PC-9 (cell line): ENCODE measurements at regions of chr12 and their contacts with region 1.

Region 1: GRCh38 chr12:108691175-108691997 is 39.9 kb downstream of the CORO1C start:
- DNase-seq: peak; percentile 89 to 97
- H3K4me3 ChIP-seq: peak overlapping the region; percentile 36; the same call in 1 of the 2 replicates
- H3K27ac ChIP-seq: peak overlapping the region; percentile 84
- H3K4me1 ChIP-seq: peaks cover 47% of the 10 kb centered on the region
- H3K27me3 ChIP-seq: no peaks in the 10 kb centered on the region
- CTCF ChIP-seq: peak; percentile 44; the same call in 1 of the 2 replicates

Region 2: GRCh38 chr12:108442067-108442466 is 249.3 kb before region 1 on chr12:
- CTCF ChIA-PET with region 1: no interaction called
- POLR2A ChIA-PET with region 1: no interaction called
- intact Hi-C with region 1: no loop called
- DNase-seq: no peak
- H3K4me3 ChIP-seq: no peak overlapping the region
- H3K27ac ChIP-seq: no peak overlapping the region
- H3K4me1 ChIP-seq: no peaks in the 10 kb centered on the region
- H3K27me3 ChIP-seq: peaks cover 89% of the 10 kb centered on the region
- CTCF ChIP-seq: no peak

Region 3: DNA sequence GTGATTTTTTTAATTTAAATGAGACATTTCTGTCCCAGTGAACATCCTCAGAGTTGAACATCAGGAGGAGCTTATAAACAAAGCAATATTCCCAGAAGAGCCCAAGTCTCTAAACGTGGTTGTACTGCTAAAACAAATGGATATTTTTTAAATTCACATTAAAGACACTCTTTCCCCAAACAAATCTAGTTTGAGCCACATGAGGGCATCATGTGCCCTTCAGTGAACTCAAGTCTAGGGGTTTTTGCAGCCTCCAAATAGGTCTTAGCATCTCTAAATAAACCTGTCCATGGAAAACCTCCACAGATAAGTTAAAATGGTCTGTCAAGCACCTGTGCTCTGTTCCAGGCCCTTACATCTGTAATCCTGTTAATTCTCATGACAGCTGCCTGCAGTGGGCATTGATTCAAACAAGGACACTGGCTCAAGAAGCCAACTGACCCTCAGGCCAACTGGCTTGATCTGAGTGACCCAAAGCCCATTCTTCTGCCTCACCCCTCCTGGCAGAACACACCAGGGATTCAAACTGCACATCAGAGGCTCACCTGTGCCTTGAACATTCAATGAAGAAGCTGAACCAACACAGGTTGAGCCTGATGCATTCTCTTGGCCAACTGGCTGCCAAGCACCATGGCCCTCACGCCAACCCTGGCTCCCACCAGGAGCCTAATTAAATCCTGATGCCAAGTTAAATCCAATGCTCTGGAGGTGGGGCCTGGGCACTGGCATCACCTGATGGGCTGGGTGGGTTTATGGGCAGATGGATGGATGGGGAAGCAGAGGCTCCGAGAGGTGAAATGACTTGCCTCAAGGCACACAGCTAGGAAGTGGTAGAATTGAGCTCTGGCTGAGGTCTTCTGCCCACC is 120.4 kb before region 1 on chr12:
- CTCF ChIA-PET with region 1: interaction called, 11 read pairs
- POLR2A ChIA-PET with region 1: no interaction called
- intact Hi-C with region 1: no loop called
- DNase-seq: no peak
- H3K4me3 ChIP-seq: no peak overlapping the region
- H3K27ac ChIP-seq: no peak overlapping the region
- H3K4me1 ChIP-seq: peaks cover 5% of the 10 kb centered on the region
- H3K27me3 ChIP-seq: no peaks in the 10 kb centered on the region
- CTCF ChIP-seq: peak; percentile 44

Region 4: GRCh38 chr12:108722992-108723766 is 31.8 kb after region 1 on chr12:
- CTCF ChIA-PET with region 1: no interaction called
- POLR2A ChIA-PET with region 1: interaction called, 8 read pairs
- intact Hi-C with region 1: loop called (anchors 2 kb)
- DNase-seq: peak in 1 of 2 experiments; percentile 92
- H3K4me3 ChIP-seq: peak overlapping the region; percentile 22; the same call in 1 of the 2 replicates
- H3K27ac ChIP-seq: peak overlapping the region; percentile 90
- H3K4me1 ChIP-seq: peaks cover 59% of the 10 kb centered on the region
- H3K27me3 ChIP-seq: no peaks in the 10 kb centered on the region
- CTCF ChIP-seq: no peak

Region 5: GRCh38 chr12:108731105-108731865 is 39.9 kb after region 1 on chr12 and contains the start of gene CORO1C:
- CTCF ChIA-PET with region 1: interaction called, 3 read pairs
- POLR2A ChIA-PET with region 1: interaction called, 23 read pairs
- intact Hi-C with region 1: loop called (anchors 1 kb)
- DNase-seq: peak; percentile 85 to 98
- H3K4me3 ChIP-seq: peak within 1 kb of the TSS; percentile 85
- H3K27ac ChIP-seq: peak within 1 kb of the TSS; percentile 84
- H3K4me1 ChIP-seq: peaks cover 46% of the 10 kb centered on the region
- H3K27me3 ChIP-seq: no peaks in the 10 kb centered on the region
- CTCF ChIP-seq: peak; percentile 80
- total RNA-seq, gene CORO1C: 122 and 139 TPM in 2 replicates

Region 6: GRCh38 chr12:109281083-109281851 is 589.9 kb after region 1 on chr12:
- CTCF ChIA-PET with region 1: no interaction called
- POLR2A ChIA-PET with region 1: interaction called, 20 read pairs
- intact Hi-C with region 1: no loop called
- DNase-seq: no peak
- H3K4me3 ChIP-seq: no peak overlapping the region
- H3K27ac ChIP-seq: no peak overlapping the region
- H3K4me1 ChIP-seq: no peaks in the 10 kb centered on the region
- H3K27me3 ChIP-seq: peaks cover 23% of the 10 kb centered on the region; the same call in 1 of the 2 replicates
- CTCF ChIP-seq: no peak